H1 (cell line): ENCODE measurements at regions of chr2 and their contacts with region 1.

Region 1: GRCh38 chr2:62774555-62775366 is 69.2 kb downstream of the EHBP1 start:
- DNase-seq: no peak
- H3K4me3 ChIP-seq: no peak overlapping the region
- H3K27ac ChIP-seq: no peak overlapping the region
- H3K4me1 ChIP-seq: peaks cover 0 to 4% (median 2%) of the 10 kb centered on the region in 4 experiments; a peak in 1 of 7 replicates
- H3K27me3 ChIP-seq: no peaks in the 10 kb centered on the region
- CTCF ChIP-seq: peak in 2 of 3 experiments; percentile 18 to 53; a peak in 2 of 4 replicates
- EP300 ChIP-seq: no peak
- POLR2A ChIP-seq: no peak
- RAD21 ChIP-seq: peak; percentile 67 to 83

Region 2: GRCh38 chr2:62627667-62628066 is 147.1 kb before region 1 on chr2:
- CTCF ChIA-PET with region 1: no interaction called
- POLR2A ChIA-PET with region 1: no interaction called
- DNase-seq: peak in 1 of 2 experiments; percentile 5
- H3K4me3 ChIP-seq: no peak overlapping the region
- H3K27ac ChIP-seq: no peak overlapping the region
- H3K4me1 ChIP-seq: peaks cover 0 to 5% (median 0%) of the 10 kb centered on the region in 4 experiments; a peak in 1 of 7 replicates
- H3K27me3 ChIP-seq: no peaks in the 10 kb centered on the region
- CTCF ChIP-seq: peak in 1 of 3 experiments; percentile 3; a peak in 1 of 4 replicates
- EP300 ChIP-seq: no peak
- POLR2A ChIP-seq: no peak
- RAD21 ChIP-seq: no peak; a peak in 1 of 4 replicates

Region 3: GRCh38 chr2:62787386-62787785 is 12.6 kb after region 1 on chr2:
- CTCF ChIA-PET with region 1: interaction called, 10 read pairs
- POLR2A ChIA-PET with region 1: no interaction called
- DNase-seq: no peak
- H3K4me3 ChIP-seq: no peak overlapping the region
- H3K27ac ChIP-seq: no peak overlapping the region
- H3K4me1 ChIP-seq: no peaks in the 10 kb centered on the region
- H3K27me3 ChIP-seq: no peaks in the 10 kb centered on the region
- CTCF ChIP-seq: no peak; a peak in 1 of 4 replicates
- EP300 ChIP-seq: no peak
- POLR2A ChIP-seq: no peak
- RAD21 ChIP-seq: peak; percentile 60 to 66